Testis (tissue), 5 donors: ENCODE measurements at regions of chr1 and their contacts with region 1.

Region 1: GRCh38 chr1:17498214-17498613 is 41.3 kb upstream of the ARHGEF10L start:
- DNase-seq: no peak
- H3K4me3 ChIP-seq: no peak overlapping the region
- H3K27ac ChIP-seq: no peak overlapping the region
- H3K4me1 ChIP-seq: peaks cover 4% of the 10 kb centered on the region
- H3K27me3 ChIP-seq: no peaks in the 10 kb centered on the region
- CTCF ChIP-seq: no peak
- POLR2A ChIP-seq: no peak

Region 2: DNA sequence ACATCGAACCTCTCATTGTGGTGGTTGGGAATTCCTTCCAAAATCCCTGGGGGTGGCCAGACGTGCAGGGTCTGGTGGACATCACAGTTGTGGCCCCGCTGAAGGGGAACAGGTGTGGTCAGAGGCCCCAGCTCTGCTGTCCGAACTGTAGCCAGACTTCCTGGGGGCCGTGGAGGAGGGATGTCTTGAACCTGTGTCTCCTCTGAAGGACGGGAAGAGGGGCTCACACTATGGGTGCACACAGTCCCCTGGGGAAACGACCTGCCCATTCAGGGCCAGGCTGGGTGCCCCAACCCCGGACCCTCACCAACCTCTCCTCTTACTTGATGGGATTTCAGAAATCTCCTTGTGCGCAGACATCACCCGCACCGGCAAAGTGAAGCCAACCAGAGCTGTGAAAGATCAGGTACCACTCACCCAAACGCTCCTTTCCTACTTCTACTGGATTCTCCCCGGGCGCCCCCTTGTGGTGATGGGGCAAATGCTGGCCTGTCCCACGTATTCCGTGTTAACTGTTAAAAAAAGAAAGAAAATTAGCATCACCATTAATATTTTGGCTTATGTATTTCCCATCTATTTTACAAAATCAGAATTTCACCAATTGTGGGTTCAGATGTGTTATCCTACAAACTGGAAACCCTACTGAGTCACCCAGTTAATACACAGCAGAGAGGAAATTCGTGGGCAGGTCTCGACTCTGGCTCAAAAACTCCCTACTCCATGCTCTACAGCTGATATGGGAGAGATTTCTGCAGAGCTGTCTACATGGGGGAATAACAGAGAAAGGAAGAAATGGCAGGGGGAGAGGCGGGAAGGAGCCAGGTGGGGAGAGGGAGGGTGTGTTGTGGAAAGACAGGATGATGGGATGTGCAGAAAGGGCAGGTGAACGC is 162.1 kb before region 1 on chr1:
- intact Hi-C with region 1: no loop called
- DNase-seq: peak; percentile 83
- H3K4me3 ChIP-seq: no peak overlapping the region
- H3K27ac ChIP-seq: no peak overlapping the region
- H3K4me1 ChIP-seq: no peaks in the 10 kb centered on the region
- H3K27me3 ChIP-seq: no peaks in the 10 kb centered on the region
- CTCF ChIP-seq: peak; percentile 70 to 90 (median 74)
- POLR2A ChIP-seq: no peak

Region 3: DNA sequence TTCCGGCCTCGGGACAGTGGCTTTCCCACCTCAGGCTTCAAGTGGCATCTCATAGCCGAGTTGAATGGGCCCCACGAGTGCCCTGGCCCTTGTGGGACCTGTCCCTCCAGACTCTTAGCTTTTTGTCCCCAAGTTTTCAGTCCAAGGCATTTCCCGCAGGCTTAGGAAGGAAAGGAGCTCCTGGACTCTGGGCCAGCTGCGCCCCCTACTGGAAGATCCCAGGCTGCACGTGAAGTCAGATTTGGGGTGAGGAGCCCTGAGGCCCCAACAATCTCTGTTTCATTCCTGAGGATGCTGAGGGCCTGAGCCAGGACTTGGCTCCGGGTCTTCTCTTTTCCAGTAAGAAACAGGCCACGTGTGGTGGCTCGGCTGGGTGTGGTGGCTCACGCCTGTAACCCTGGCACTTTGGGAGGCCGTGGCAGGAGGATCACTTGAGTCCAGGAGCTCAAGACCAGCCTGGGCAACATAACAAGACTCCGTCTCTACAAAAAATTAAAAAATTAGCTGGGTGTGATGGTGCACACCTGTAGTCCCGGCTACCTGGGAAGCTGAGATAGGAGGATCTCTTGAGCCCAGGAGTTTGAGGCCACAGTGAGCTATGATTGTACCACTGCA is 108.7 kb after region 1 on chr1:
- intact Hi-C with region 1: loop called (anchors 5 kb)
- DNase-seq: peak; percentile 84
- H3K4me3 ChIP-seq: no peak overlapping the region
- H3K27ac ChIP-seq: no peak overlapping the region
- H3K4me1 ChIP-seq: peaks cover 6% of the 10 kb centered on the region
- H3K27me3 ChIP-seq: no peaks in the 10 kb centered on the region
- CTCF ChIP-seq: peak; percentile 84 to 90 (median 89)
- POLR2A ChIP-seq: no peak